Activated CD4-positive, alpha-beta T cell treated with anti-CD3 and anti-CD28 coated beads, Interleukin-2, amount 10 ng/mL, durations not matched to agents 7 days and 5 days (primary cell): ENCODE measurements at regions of chr17 and their contacts with region 1.

Region 1: DNA sequence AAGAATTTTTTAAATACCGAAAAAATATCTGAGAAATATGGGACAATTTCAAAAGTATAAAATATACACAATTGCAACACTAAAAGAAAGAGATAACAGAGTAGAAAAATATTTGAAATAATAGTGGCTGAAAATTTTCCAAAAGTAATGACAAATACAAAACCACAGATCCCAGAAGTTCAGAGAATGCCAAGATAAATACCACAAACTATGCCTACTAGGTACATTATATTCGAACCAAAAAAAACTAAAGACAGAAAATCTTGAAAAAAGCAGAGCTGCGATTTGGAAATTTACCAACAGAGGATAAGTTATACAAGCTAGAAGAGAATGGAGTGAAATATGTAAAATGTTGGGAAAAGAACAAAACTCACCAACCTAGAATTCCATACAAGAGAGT is 191.3 kb upstream of the ELAC2 start:
- DNase-seq: no peak
- H3K4me3 Mint-ChIP-seq: no peak overlapping the region
- H3K27ac Mint-ChIP-seq: no peak overlapping the region
- H3K4me1 Mint-ChIP-seq: no peaks in the 10 kb centered on the region
- H3K27me3 Mint-ChIP-seq: no peaks in the 10 kb centered on the region

Region 2: GRCh38 chr17:13230350-13231264 is 21.5 kb after region 1 on chr17:
- CTCF ChIA-PET with region 1: no interaction called
- POLR2A ChIA-PET with region 1: interaction called, 18 read pairs
- DNase-seq: no peak
- H3K4me3 Mint-ChIP-seq: no peak overlapping the region
- H3K27ac Mint-ChIP-seq: no peak overlapping the region
- H3K4me1 Mint-ChIP-seq: no peaks in the 10 kb centered on the region
- H3K27me3 Mint-ChIP-seq: no peaks in the 10 kb centered on the region

Region 3: DNA sequence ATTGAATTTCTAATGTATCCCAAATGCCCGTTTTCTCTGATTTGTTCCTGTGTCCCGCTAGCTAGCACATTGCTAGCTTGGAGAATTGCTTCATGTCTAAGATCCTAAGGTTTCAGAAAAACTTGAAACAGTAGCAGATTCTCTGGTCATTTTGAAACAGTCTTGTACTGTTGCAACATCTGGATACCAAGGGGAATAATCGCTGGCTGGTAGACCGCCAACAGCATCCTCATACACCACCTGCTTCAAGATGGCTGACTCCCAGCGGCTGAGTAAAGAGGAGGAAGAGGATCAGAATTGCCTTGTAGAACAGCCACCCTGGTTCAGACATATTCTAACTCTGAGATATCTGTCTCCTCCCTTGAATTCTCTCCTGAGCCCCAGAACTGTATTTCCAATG is 35.4 kb after region 1 on chr17:
- CTCF ChIA-PET with region 1: no interaction called
- POLR2A ChIA-PET with region 1: no interaction called
- DNase-seq: no peak
- H3K4me3 Mint-ChIP-seq: no peak overlapping the region
- H3K27ac Mint-ChIP-seq: no peak overlapping the region
- H3K4me1 Mint-ChIP-seq: no peaks in the 10 kb centered on the region
- H3K27me3 Mint-ChIP-seq: no peaks in the 10 kb centered on the region